PC-3 (cell line): ENCODE measurements at regions of chr14 and their contacts with region 1.

Region 1: GRCh38 chr14:68795597-68796417 is 2.9 kb upstream of the ZFP36L1 start:
- DNase-seq: peak; percentile 84
- ATAC-seq: peak; percentile 55
- H3K4me3 ChIP-seq: peak overlapping the region; percentile 90
- H3K27ac ChIP-seq: peak overlapping the region; percentile 97
- H3K4me1 ChIP-seq: peaks cover 19% of the 10 kb centered on the region
- H3K27me3 ChIP-seq: no peaks in the 10 kb centered on the region
- CTCF ChIP-seq: peak; percentile 66

Region 2: DNA sequence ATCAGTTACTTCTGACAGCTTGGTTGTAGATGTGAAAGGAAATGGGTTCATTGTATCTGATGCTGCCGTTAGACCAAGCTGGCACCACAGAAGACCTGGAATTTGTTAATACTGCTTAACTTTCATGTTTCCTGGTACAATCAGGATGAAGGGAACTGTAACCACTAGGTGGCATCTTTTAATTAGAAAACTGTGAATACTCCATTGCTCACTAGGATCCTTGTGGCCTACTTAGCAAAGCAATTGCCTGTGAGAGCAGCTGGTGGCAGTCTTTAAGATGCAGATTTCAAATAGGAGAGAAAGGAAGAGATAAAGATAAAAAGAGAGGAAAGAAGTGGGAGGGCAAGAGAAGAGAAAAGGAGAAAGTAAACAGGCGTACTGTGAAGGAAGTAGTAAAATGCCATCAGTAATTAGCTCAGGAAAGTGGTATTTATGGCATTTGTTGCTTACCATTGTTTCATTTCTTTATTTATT is 861.8 kb before region 1 on chr14:
- CTCF ChIA-PET with region 1: no interaction called
- POLR2A ChIA-PET with region 1: no interaction called
- intact Hi-C with region 1: loop called (anchors 2 kb)
- DNase-seq: peak; percentile 88
- ATAC-seq: peak; percentile 99
- H3K4me3 ChIP-seq: no peak overlapping the region
- H3K27ac ChIP-seq: no peak overlapping the region
- H3K4me1 ChIP-seq: no peaks in the 10 kb centered on the region
- H3K27me3 ChIP-seq: no peaks in the 10 kb centered on the region
- CTCF ChIP-seq: peak; percentile 96

Region 3: GRCh38 chr14:68255697-68256203 is 540.1 kb before region 1 on chr14:
- CTCF ChIA-PET with region 1: no interaction called
- POLR2A ChIA-PET with region 1: interaction called, 16 read pairs
- intact Hi-C with region 1: no loop called
- DNase-seq: peak; percentile 94
- ATAC-seq: peak; percentile 98
- H3K4me3 ChIP-seq: no peak overlapping the region
- H3K27ac ChIP-seq: peak overlapping the region; percentile 29
- H3K4me1 ChIP-seq: peaks cover 33% of the 10 kb centered on the region
- H3K27me3 ChIP-seq: no peaks in the 10 kb centered on the region
- CTCF ChIP-seq: no peak

Region 4: GRCh38 chr14:68506021-68506644 is 289.7 kb before region 1 on chr14:
- CTCF ChIA-PET with region 1: no interaction called
- POLR2A ChIA-PET with region 1: interaction called, 8 read pairs
- intact Hi-C with region 1: loop called (anchors 2 kb)
- DNase-seq: peak; percentile 71
- ATAC-seq: peak; percentile 72
- H3K4me3 ChIP-seq: no peak overlapping the region
- H3K27ac ChIP-seq: peak overlapping the region; percentile 68
- H3K4me1 ChIP-seq: peaks cover 20% of the 10 kb centered on the region
- H3K27me3 ChIP-seq: no peaks in the 10 kb centered on the region
- CTCF ChIP-seq: no peak

Region 5: DNA sequence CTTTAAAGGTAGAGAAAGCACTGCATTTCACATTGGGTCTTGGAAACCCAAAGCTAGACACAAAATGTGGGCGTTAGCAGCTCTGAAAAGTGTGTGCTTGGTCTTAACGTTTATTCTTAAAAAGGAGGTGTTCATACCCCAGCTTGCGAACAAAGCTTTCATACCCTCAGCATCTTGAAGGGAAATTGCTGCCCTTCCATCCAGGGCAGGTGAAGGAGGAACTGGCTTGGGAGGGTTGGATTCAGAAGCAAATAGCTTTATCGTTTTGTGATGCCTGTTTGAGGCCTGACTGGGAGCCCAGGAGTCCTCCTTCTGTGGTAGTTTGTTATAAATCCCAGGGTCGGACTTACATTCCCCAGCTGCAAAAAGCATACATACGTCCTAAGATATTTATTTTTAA is 166.4 kb before region 1 on chr14:
- CTCF ChIA-PET with region 1: no interaction called
- POLR2A ChIA-PET with region 1: interaction called, 11 read pairs
- intact Hi-C with region 1: no loop called
- DNase-seq: no peak
- ATAC-seq: no peak
- H3K4me3 ChIP-seq: no peak overlapping the region
- H3K27ac ChIP-seq: no peak overlapping the region
- H3K4me1 ChIP-seq: peaks cover 9% of the 10 kb centered on the region
- H3K27me3 ChIP-seq: no peaks in the 10 kb centered on the region
- CTCF ChIP-seq: no peak

Region 6: DNA sequence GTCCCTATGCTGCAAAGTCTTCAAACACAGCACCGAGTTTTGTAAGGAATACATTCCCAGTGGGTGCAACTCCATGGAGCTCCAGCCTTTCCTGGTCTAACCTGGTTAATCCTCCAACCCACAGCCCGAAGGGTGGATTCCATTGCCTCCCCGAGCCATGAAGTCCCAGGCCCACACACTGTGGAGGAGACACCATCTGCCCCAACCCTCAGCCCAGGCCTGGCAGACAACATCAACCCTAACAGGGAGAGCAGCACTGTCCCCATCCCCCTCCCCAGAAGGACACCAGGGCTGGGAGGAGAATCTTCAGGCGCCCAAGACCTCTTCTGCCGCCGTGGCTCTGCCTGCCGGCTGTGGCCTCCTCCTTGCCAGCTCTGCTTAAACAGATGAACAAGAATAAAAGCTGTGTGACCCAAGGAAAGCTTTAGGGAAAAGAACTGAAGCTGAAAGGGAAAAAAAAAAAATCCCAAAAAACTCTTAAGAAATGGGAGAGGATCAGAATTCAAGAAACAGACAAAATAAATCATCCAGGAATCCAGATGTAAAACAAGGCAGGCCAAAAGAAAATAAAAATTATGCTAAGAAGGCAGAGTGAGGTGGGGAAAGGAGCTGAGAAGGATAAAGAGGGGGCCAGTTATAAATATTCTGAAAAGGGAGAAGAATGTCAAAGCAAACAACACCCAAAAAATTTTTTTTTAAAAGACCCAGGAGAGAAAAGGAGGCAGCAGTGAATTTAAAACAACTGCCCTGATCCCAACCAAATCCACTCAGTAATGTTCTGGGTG is 13.1 kb after region 1 on chr14:
- CTCF ChIA-PET with region 1: no interaction called
- POLR2A ChIA-PET with region 1: interaction called, 21 read pairs
- intact Hi-C with region 1: no loop called
- DNase-seq: no peak
- ATAC-seq: no peak
- H3K4me3 ChIP-seq: no peak overlapping the region
- H3K27ac ChIP-seq: no peak overlapping the region
- H3K4me1 ChIP-seq: no peaks in the 10 kb centered on the region
- H3K27me3 ChIP-seq: no peaks in the 10 kb centered on the region
- CTCF ChIP-seq: no peak

Region 7: GRCh38 chr14:69464829-69465228 is 669.0 kb after region 1 on chr14:
- CTCF ChIA-PET with region 1: no interaction called
- POLR2A ChIA-PET with region 1: no interaction called
- intact Hi-C with region 1: no loop called
- DNase-seq: peak; percentile 92
- ATAC-seq: peak; percentile 96
- H3K4me3 ChIP-seq: peak overlapping the region; percentile 34; the same call in 1 of the 2 replicates
- H3K27ac ChIP-seq: peak overlapping the region; percentile 92
- H3K4me1 ChIP-seq: peaks cover 14% of the 10 kb centered on the region
- H3K27me3 ChIP-seq: no peaks in the 10 kb centered on the region
- CTCF ChIP-seq: no peak